Activated B cell treated with CpG ODN at 0.5 μM for 24 hours (primary cell): ENCODE measurements at regions of chr18 and their contacts with region 1.

Region 1: GRCh38 chr18:50967714-50968661 is at the start of gene ELAC1:
- DNase-seq: peak; percentile 75
- ATAC-seq: peak; percentile 95
- H3K4me3 Mint-ChIP-seq: peak within 1 kb of the TSS; percentile 92
- H3K27ac Mint-ChIP-seq: peak within 1 kb of the TSS; percentile 89
- H3K4me1 Mint-ChIP-seq: peaks cover 11% of the 10 kb centered on the region
- H3K27me3 Mint-ChIP-seq: no peaks in the 10 kb centered on the region
- CTCF ChIP-seq: no peak
- total RNA-seq, gene ELAC1: 9.7 and 14.0 TPM in 2 replicates

Region 2: GRCh38 chr18:50902797-50903196 is 65.2 kb before region 1 on chr18:
- CTCF ChIA-PET with region 1: no interaction called
- POLR2A ChIA-PET with region 1: interaction called, 3 read pairs
- intact Hi-C with region 1: loop called (anchors 5 kb)
- DNase-seq: no peak
- ATAC-seq: no peak
- H3K4me3 Mint-ChIP-seq: no peak overlapping the region
- H3K27ac Mint-ChIP-seq: no peak overlapping the region
- H3K4me1 Mint-ChIP-seq: peaks cover 20% of the 10 kb centered on the region
- H3K27me3 Mint-ChIP-seq: no peaks in the 10 kb centered on the region
- CTCF ChIP-seq: no peak

Region 3: GRCh38 chr18:50986360-50987087 is 18.5 kb after region 1 on chr18:
- CTCF ChIA-PET with region 1: no interaction called
- POLR2A ChIA-PET with region 1: interaction called, 8 read pairs
- intact Hi-C with region 1: loop called (anchors 2 kb)
- DNase-seq: no peak
- ATAC-seq: no peak
- H3K4me3 Mint-ChIP-seq: no peak overlapping the region
- H3K27ac Mint-ChIP-seq: no peak overlapping the region
- H3K4me1 Mint-ChIP-seq: no peaks in the 10 kb centered on the region
- H3K27me3 Mint-ChIP-seq: no peaks in the 10 kb centered on the region
- CTCF ChIP-seq: no peak

Region 4: DNA sequence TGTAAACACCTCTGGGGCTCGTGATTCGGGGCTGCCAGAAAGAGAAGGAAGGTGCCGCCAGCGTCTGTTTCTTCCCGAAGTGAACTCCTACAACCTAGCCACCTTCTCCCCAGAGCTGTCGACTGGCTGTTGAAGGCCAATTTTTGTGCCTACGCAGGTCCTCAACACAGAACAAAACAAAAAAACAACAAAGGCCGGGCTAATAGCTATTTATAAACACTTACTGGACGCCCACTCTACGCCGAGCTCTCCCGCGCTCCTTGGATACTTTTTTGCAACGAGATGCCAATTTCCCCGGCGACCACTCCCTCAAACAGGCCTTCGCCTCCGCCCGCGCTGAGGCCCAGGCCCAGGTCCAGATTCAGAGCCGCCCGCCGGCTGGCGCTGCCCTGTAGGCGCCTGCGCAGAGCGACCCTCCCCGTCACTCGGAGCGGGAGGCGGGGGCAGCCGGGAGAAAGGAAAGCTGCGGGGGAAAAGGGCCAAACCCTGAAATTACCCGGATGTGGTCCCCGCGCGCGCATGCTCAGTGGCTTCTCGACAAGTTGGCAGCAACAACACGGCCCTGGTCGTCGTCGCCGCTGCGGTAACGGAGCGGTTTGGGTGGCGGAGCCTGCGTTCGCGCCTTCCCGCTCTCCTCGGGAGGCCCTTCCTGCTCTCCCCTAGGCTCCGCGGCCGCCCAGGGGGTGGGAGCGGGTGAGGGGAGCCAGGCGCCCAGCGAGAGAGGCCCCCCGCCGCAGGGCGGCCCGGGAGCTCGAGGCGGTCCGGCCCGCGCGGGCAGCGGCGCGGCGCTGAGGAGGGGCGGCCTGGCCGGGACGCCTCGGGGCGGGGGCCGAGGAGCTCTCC is 61.9 kb after region 1 on chr18 and contains the start of gene SMAD4:
- CTCF ChIA-PET with region 1: interaction called, 7 read pairs
- POLR2A ChIA-PET with region 1: interaction called, 62 read pairs
- intact Hi-C with region 1: loop called (anchors 1 kb)
- DNase-seq: peak; percentile 98
- ATAC-seq: peak; percentile 85
- H3K4me3 Mint-ChIP-seq: peak within 1 kb of the TSS; percentile 96
- H3K27ac Mint-ChIP-seq: peak within 1 kb of the TSS; percentile 96
- H3K4me1 Mint-ChIP-seq: peaks cover 57% of the 10 kb centered on the region
- H3K27me3 Mint-ChIP-seq: no peaks in the 10 kb centered on the region
- CTCF ChIP-seq: no peak
- total RNA-seq, gene SMAD4: 83.8 and 94.9 TPM in 2 replicates